Activated CD8-positive, alpha-beta memory T cell treated with anti-CD3 and anti-CD28 coated beads, Interleukin-2, amount 10 ng/mL, durations not matched to agents 7 days and 5 days (primary cell): ENCODE measurements at regions of chr19 and their contacts with region 1.

Region 1: DNA sequence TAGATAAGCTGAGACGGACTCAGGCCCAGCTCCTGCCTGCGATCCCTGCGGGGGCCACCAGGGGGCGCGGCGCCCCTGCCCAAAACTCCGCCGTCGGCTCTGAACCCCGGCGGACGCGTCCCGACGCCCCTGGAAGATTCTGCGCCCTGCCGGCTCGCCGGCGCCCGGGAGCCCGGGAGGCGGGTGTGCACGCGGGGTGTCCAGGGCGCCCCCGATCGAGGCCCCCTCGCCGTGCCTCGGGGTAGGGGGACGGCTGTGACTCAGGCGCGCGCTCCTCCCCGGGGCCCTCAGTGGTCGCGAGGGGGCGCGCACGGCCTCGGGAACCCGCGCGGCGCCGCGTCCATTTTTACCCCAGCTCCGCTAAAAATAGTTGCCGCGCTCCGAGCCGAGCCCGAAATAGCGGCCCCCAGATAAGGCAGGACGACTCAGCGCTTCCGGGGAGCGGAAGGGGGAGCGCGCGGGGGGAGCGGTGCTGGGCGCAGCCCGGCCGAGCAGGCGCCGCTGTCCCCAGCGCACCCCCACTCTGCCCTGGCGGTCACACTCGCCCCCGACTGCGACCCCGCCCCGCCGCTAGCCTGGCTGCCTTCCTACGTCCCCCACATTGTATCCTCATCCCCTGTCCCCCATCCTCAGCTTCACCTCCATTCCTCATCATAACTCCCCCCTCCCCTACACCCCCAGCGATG is 16.0 kb upstream of the ERCC1 start:
- DNase-seq: peak; percentile 93
- ATAC-seq: peak; percentile 79
- H3K4me3 Mint-ChIP-seq: peak overlapping the region; percentile 64
- H3K27ac Mint-ChIP-seq: peak overlapping the region; percentile 83
- H3K4me1 Mint-ChIP-seq: peaks cover 30% of the 10 kb centered on the region
- H3K27me3 Mint-ChIP-seq: no peaks in the 10 kb centered on the region

Region 2: DNA sequence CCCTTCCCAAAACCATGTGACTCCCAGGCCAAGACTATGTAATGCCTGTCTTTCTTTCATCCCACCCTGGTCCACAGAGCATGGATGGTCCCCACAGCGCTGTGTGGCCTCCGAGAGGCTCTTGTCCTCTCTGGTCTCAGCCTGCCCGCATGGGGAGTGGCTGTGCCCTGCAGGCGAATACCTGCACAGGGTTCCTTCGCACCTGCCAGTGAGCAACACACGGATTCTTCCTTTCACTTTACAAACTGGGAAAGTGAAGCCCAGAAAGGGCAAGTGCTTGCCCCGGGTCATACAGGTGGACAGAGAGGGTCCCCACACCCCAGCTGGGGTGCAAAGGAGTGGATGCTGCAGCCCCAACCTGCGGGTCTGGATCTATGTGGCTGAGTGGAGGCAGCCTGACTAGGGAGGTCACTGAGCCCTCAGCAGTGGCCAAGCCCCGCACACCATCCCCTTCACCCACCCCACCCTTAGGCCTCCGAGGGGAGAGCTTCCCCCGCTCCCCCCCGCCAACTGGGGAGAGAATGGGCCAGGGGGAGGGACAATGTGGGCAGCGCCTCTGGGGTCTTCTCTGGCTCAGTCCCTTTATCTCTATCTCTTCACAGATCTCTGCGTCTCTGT is 189.4 kb before region 1 on chr19:
- CTCF ChIA-PET with region 1: no interaction called
- DNase-seq: no peak
- ATAC-seq: no peak
- H3K4me3 Mint-ChIP-seq: peak overlapping the region; percentile 78
- H3K27ac Mint-ChIP-seq: peak overlapping the region; percentile 78
- H3K4me1 Mint-ChIP-seq: peaks cover 35% of the 10 kb centered on the region
- H3K27me3 Mint-ChIP-seq: peaks cover 2% of the 10 kb centered on the region

Region 3: GRCh38 chr19:45385392-45386221 is 54.1 kb before region 1 on chr19:
- CTCF ChIA-PET with region 1: no interaction called
- DNase-seq: no peak
- ATAC-seq: no peak
- H3K4me3 Mint-ChIP-seq: no peak overlapping the region
- H3K27ac Mint-ChIP-seq: no peak overlapping the region
- H3K4me1 Mint-ChIP-seq: no peaks in the 10 kb centered on the region
- H3K27me3 Mint-ChIP-seq: peaks cover 33% of the 10 kb centered on the region

Region 4: GRCh38 chr19:45423589-45424190 is 16.0 kb before region 1 on chr19 and contains the start of gene ERCC1:
- CTCF ChIA-PET with region 1: interaction called, 35 read pairs
- DNase-seq: peak; percentile 96
- ATAC-seq: peak; percentile 79
- H3K4me3 Mint-ChIP-seq: peak within 1 kb of the TSS; percentile 93
- H3K27ac Mint-ChIP-seq: peak within 1 kb of the TSS; percentile 93
- H3K4me1 Mint-ChIP-seq: peaks cover 65% of the 10 kb centered on the region
- H3K27me3 Mint-ChIP-seq: peaks cover 4% of the 10 kb centered on the region
- total RNA-seq, gene ERCC1: 62.5 to 73.4 TPM

Region 5: DNA sequence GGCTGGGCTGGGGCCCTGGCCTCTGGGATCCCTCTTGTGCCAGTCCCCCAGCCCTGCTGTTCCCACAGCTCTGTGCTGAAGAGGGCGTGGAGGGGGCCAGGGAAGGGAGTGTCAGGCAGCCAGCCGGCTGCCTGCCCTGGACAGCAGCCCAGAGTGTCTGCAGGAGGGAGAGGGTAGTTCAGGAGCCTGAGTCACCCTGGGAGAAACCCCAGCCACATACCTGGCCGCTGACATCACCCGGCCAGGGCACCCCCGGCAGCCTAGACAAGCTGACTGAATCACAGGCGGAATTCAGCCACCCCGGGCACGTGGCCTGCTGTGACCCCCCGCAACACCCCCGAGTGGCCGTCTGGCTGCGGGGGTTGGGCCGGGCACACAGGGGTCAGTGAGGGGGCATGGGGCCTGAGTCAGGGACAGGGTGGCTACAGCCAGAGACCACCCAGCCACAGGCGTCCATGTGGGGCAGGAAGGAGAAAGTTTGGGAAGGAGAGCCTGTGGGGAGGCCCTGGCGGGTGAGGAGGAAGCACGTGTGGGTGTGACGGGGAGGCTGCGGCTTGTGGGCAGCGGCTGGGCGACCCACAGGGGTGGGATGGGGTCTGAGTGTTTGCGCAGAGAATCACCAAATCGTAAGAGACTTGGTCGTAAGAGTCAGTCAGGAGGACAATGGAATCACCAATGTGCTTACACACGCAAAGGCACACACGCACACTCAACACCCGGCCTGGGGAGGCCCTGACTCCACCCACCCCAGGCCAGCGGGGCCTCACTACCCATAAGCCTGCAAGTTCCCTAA is 16.2 kb after region 1 on chr19:
- CTCF ChIA-PET with region 1: interaction called, 18 read pairs
- DNase-seq: peak; percentile 73
- ATAC-seq: peak; percentile 40
- H3K4me3 Mint-ChIP-seq: no peak overlapping the region
- H3K27ac Mint-ChIP-seq: no peak overlapping the region
- H3K4me1 Mint-ChIP-seq: peaks cover 29% of the 10 kb centered on the region
- H3K27me3 Mint-ChIP-seq: peaks cover 9% of the 10 kb centered on the region

Region 6: GRCh38 chr19:45485305-45486077 is 45.8 kb after region 1 on chr19:
- CTCF ChIA-PET with region 1: interaction called, 1,113 read pairs
- DNase-seq: peak; percentile 99
- ATAC-seq: peak; percentile 98
- H3K4me3 Mint-ChIP-seq: peak overlapping the region; percentile 85
- H3K27ac Mint-ChIP-seq: peak overlapping the region; percentile 90
- H3K4me1 Mint-ChIP-seq: peaks cover 12% of the 10 kb centered on the region
- H3K27me3 Mint-ChIP-seq: no peaks in the 10 kb centered on the region

Region 7: GRCh38 chr19:45506246-45506990 is 66.7 kb after region 1 on chr19:
- CTCF ChIA-PET with region 1: interaction called, 10 read pairs
- DNase-seq: peak; percentile 98
- ATAC-seq: peak; percentile 76
- H3K4me3 Mint-ChIP-seq: peak overlapping the region; percentile 99
- H3K27ac Mint-ChIP-seq: peak overlapping the region; percentile 98
- H3K4me1 Mint-ChIP-seq: peaks cover 40% of the 10 kb centered on the region
- H3K27me3 Mint-ChIP-seq: no peaks in the 10 kb centered on the region